Calu3 (cell line): ENCODE measurements at regions of chr9 and their contacts with region 1.

Region 1: DNA sequence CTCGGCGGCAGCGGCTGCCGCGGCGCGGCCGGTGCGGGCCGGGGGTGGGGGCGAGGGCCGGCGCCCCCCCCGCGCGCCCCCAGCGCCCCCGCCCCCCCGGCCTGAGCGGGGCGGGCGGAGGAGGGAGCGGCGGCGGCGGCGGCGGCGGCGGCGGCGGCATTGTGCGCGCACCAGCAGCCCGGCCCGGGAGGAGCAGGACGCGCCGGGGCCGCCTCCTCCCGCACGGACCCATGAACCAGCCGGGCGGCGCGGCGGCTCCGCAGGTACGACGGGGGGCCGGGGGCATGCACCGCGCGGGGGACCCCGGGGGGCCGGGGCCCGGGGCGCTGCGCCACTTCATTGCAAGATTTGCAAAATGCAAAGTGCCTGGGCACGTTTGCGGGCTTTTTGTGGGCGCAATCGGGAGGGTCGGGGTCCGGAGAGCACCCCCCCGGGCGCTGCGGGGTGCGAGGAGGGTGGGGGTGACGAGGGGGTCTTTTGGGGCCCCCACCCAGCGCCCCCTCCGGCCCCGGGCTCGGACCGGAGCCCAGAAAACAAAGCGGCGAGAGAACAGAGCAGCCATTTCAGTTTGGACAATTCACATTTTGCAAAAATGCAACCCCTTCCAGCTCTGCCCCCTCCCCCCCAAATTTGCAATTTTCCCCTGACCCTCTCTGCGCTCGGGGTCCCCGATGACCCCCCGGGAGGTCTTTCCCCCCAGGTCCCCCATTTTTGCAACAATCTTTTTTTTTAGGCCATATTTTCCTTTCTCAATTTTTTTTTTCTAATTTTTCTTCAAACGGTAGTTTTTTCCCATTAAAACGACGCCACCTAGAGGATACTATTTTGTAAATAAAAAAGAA is at the start of gene ZNF618:
- DNase-seq: peak; percentile 33
- H3K4me3 Mint-ChIP-seq: peak within 1 kb of the TSS; percentile 85
- H3K27ac Mint-ChIP-seq: peak within 1 kb of the TSS; percentile 96
- H3K4me1 Mint-ChIP-seq: no peaks in the 10 kb centered on the region
- H3K27me3 Mint-ChIP-seq: peaks cover 3% of the 10 kb centered on the region
- CTCF ChIP-seq: no peak
- total RNA-seq, gene ZNF618: 18.0 and 20.3 TPM in 2 replicates

Region 2: DNA sequence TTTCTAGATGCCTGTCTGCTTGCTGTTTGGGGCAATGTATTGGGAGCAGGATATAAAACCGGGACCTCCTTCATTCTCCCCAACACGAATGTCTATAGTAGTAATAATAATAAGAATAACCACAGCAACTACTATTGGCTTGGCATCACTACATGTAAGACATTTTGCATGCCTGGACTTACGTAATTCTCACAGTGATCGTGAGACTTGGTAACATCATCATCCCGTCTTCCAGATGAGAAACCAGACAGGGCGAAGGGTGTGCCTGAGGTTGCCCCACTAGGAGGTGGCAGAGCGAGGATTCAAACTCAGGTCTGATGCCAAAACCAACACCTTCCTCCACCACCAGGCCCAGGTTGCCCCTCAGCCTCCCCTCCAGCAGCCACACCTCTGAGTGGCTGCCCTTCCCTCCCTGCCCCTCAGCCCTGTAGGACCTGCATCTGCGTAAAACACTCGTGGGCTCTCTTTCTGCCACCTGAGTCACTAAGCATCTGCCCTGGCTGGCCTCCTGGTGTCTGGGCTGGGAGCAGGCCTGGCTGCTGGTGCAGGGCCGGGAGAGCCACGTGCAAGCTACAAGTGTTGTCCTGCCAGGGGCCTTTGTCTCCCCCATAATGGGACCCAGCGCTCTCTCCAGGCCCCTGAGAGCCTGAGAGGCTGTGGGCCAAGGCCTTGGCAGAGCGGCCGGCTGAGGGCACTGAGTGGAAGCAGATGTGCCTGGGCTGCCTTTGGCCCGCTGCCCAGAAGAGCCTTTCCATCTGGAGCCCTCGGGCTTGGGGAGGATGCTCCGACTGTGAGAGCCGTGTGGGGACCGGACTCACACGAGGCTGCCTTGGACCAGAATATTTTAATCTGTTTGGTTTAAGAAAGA is 227.6 kb before region 1 on chr9:
- CTCF ChIA-PET with region 1: no interaction called
- intact Hi-C with region 1: no loop called
- DNase-seq: no peak
- H3K4me3 Mint-ChIP-seq: no peak overlapping the region
- H3K27ac Mint-ChIP-seq: no peak overlapping the region
- H3K4me1 Mint-ChIP-seq: no peaks in the 10 kb centered on the region
- H3K27me3 Mint-ChIP-seq: no peaks in the 10 kb centered on the region
- CTCF ChIP-seq: no peak

Region 3: DNA sequence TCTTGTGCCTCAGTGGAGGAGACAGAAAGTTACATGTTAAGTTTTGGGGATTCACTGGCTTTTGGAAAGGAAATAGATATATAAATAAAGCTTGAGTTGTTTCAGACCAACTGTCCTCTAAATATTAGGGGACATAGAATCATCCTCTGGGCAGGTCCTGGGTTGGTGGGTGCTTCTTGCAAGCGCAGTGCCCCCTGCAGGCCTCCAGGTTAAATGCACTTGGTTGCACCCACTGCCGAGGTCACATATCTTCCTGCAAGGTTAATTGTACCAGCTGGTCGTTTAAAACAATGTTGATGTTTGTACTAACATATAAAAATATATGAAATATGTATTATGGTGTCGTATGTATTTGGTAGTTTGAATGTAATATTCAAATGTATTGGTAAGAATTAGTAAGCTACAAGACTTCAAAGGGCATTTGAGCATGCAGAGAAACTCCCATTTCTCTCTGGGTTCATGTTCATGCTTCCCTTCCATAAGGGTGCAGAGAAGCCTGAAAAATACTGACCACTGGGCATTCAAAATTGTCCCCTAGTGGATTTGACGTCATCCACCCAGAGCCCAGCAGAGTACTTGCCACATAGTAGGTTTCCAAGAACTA is 86.7 kb after region 1 on chr9:
- CTCF ChIA-PET with region 1: no interaction called
- intact Hi-C with region 1: loop called (anchors 5 kb)
- DNase-seq: peak; percentile 24
- H3K4me3 Mint-ChIP-seq: no peak overlapping the region
- H3K27ac Mint-ChIP-seq: no peak overlapping the region
- H3K4me1 Mint-ChIP-seq: peaks cover 20% of the 10 kb centered on the region
- H3K27me3 Mint-ChIP-seq: no peaks in the 10 kb centered on the region
- CTCF ChIP-seq: peak; percentile 26

Region 4: DNA sequence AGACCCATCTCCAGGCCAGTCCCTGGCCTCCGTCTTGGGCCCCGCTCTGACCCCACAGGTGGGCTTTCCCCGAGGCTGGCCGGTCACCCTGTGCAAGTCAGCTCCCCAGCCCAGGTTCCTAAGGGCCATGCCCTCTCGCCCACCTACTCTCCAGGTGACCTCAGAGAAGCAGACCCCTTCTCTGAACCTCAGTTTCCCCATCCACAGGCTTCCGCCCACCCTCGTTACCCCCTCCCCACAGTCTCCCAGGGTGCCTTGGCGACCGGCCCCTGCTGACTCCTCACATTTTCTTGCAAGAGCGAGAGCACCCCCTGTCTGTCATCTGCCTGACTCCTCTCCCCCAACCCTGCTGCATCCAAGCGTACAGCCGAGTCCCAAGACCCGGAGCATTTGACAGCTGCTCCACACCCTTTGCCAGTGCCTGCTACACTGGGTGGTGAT is 395.3 kb after region 1 on chr9:
- CTCF ChIA-PET with region 1: no interaction called
- intact Hi-C with region 1: no loop called
- DNase-seq: peak; percentile 57
- H3K4me3 Mint-ChIP-seq: no peak overlapping the region
- H3K27ac Mint-ChIP-seq: no peak overlapping the region
- H3K4me1 Mint-ChIP-seq: no peaks in the 10 kb centered on the region
- H3K27me3 Mint-ChIP-seq: no peaks in the 10 kb centered on the region
- CTCF ChIP-seq: no peak